Sciatic nerve (tissue), 2 donors: ENCODE measurements at regions of chr17 and their contacts with region 1.

Region 1: GRCh38 chr17:56319517-56319916 is 166.2 kb downstream of the ANKFN1 start:
- DNase-seq: no peak
- ATAC-seq: peak; percentile 76

Region 2: GRCh38 chr17:56034201-56034635 is 285.3 kb before region 1 on chr17:
- intact Hi-C with region 1: no loop called
- DNase-seq: no peak
- ATAC-seq: peak; percentile 93

Region 3: DNA sequence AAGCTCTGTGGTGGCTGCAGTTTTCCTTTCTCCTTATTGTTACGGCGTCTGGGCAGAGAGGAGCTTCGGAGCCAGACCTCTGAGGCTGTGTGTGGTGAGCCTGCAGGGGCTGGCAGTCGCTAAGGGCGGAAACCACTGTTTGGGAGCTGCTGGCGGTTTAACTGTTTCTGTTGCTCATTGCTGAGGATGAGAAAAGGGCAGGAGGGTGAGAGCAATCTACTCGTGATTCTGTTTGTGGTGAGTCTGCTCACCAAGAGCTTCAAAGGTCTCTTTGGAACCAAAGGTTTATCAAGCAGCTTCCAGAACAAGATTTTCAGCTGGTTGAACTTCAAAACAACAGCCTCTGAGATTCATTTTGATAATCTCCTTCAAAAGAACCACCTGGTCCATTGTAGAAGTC is 22.3 kb before region 1 on chr17:
- intact Hi-C with region 1: loop called (anchors 1 kb)
- DNase-seq: no peak
- ATAC-seq: peak; percentile 32

Region 4: GRCh38 chr17:56406794-56407193 is 87.3 kb after region 1 on chr17:
- intact Hi-C with region 1: no loop called
- DNase-seq: no peak
- ATAC-seq: no peak